ENCODE measurements at regions of chr15 and their contacts with region 1.

Region 1: DNA sequence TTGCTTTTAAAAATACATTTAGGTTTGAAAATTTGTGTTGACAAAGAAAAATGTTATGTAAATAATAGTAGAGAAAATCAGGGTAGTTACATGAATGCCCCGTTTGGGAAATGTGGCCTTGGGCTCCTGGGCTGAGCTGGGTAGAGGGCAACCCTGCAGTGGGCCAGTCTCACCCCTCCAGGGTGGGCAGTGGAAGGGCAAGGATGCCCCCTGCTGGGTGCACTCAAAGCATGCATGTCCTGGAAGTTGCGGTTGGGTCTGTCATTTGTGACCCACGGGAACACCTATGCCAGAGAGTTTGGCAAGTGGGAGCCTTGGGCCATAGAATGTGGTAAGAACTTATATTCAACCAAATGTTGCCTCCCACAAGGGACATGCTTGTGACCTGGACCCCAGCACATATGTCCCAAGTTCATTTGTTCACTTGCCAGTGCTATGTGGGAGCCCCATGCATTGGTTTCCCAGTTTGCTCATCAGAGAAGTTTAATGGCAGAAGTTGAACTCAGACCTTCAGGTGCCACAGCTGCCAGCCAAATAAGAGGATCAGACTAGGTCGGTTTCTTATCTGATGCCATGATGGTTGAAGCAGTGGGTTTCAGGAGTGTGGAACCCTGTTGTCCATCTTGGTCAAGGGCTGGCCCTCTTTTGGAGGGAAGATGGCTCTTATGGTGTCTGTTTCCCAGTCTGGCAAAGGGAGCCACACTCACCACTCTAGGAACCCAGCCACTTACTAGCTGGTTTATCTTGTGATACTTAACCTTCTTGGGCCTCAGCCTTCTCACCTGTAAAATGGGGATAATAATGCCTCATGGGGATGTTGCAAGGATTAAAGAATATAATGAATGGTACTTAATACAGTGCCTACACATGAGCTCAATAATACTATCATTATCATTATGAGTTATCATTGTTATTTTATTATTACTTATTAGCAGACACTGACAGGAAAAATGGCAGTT is 2.5 kb upstream of the PLCB2 start:
- DNase-seq: peak; percentile 33
- ATAC-seq: peak; percentile 71
- H3K4me3 ChIP-seq: no peak overlapping the region
- H3K27ac ChIP-seq: no peak overlapping the region
- H3K4me1 ChIP-seq: peaks cover 6% of the 10 kb centered on the region
- H3K27me3 ChIP-seq: peaks cover 57% of the 10 kb centered on the region
- CTCF ChIP-seq: peak; percentile 71
- POLR2A ChIP-seq: no peak
- RAD21 ChIP-seq: peak; percentile 83

Region 2: DNA sequence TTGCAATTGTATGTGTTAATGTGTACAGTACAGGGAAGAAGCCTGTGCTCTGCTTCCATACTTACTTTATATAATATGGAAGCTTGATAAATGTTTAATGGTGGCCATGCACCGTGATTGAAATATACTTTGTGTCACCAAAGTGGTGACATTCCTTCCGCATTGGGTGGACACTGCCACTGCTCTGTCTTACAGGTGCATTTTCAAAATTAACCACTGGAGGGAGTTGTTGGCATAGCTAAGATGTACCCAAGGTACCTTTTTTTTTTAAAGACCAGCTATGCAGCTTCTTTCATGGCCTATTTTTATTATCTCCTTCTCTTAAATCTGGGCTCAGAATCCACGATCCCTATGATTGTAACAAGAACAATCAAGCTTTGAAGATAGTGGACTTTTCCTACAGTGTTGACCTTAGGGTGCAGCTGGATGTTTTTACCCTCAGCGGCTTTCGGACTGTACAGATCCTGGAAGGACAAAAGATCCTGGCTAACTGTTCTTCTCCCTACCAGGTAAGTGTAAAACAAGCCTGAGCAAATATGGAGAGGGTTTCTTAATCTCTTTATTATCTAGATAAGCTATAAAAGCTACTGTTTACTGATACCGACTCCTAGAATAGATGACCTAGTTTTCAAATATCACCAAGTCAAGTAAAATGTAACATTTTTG is 93.0 kb before region 1 on chr15:
- CTCF ChIA-PET with region 1: no interaction called
- POLR2A ChIA-PET with region 1: no interaction called
- dilution Hi-C with region 1: no loop called
- in situ Hi-C with region 1: no loop called
- intact Hi-C with region 1: loop called (anchors 2 kb)
- DNase-seq: peak; percentile 70
- ATAC-seq: peak; percentile 92
- H3K4me3 ChIP-seq: no peak overlapping the region
- H3K27ac ChIP-seq: no peak overlapping the region
- H3K4me1 ChIP-seq: no peaks in the 10 kb centered on the region
- H3K27me3 ChIP-seq: no peaks in the 10 kb centered on the region
- CTCF ChIP-seq: peak; percentile 95
- POLR2A ChIP-seq: no peak
- RAD21 ChIP-seq: peak; percentile 96

Region 3: DNA sequence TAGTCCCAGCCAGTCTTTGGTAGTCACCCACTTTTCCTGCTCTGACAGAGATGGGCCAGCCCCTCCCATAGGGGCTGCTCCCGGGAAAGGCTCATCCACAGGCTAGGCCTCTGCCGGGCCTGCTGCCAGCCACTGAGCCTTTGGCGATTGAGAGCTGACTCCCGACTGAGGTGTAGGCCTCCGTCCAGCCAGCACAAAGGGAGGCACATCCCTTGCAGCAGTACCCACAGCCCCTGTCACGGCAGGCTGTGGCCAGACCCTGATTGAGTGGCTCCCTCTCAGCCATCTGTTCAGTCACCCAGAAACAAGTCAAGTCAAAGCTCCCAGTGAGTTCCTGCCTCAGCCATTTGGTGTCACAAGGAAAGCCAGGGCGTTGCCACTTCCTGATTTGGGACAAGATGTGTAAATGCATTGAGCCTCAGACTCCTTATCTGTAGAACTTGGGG is 77.6 kb before region 1 on chr15:
- CTCF ChIA-PET with region 1: no interaction called
- POLR2A ChIA-PET with region 1: no interaction called
- dilution Hi-C with region 1: no loop called
- in situ Hi-C with region 1: no loop called
- intact Hi-C with region 1: no loop called
- DNase-seq: peak; percentile 22
- ATAC-seq: peak; percentile 53; the same call in 1 of the 2 replicates
- H3K4me3 ChIP-seq: no peak overlapping the region
- H3K27ac ChIP-seq: no peak overlapping the region
- H3K4me1 ChIP-seq: 0 out of 2 replicates have a peak, but pooled peaks cover 2% of the 10 kb centered on the region
- H3K27me3 ChIP-seq: no peaks in the 10 kb centered on the region
- CTCF ChIP-seq: no peak
- POLR2A ChIP-seq: no peak
- RAD21 ChIP-seq: no peak